Activated T-helper 1 cell treated with anti-CD3 and anti-CD28 coated beads, Interleukin-12 subunit alpha, Interleukin-12 subunit beta, Interleukin-2, Interleukin-4 antibody, amounts not matched to agents 30 ng/mL and 10 ng/mL and 1 ng/mL, durations not matched to agents 14 hours and 24 hours and 36 hours (primary cell): ENCODE measurements at regions of chr16 and their contacts with region 1.

Region 1: DNA sequence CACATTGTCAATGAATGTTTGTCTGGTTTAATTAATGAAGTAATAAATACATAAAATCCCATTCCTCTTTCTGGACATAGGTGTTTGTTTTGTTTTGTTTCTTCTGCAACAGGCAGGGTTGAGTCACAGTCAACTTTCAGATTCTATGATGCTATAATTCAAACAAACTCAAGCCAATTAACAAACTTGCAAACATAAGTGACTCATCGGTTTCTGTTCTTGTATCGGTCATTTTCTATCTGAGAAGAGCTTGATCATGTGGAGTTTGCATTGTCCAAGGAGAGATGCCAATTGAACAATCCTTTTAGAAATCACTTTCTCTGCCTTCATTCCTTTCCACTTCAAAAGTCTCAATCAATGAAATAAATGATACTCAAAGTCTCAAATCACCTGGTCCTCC is 294.2 kb upstream of the C16orf82 start:
- DNase-seq: no peak
- H3K4me3 Mint-ChIP-seq: no peak overlapping the region
- H3K27ac Mint-ChIP-seq: peak overlapping the region; percentile 50
- H3K4me1 Mint-ChIP-seq: peaks cover 28% of the 10 kb centered on the region
- H3K27me3 Mint-ChIP-seq: no peaks in the 10 kb centered on the region

Region 2: GRCh38 chr16:25966172-25967097 is 806.1 kb before region 1 on chr16:
- intact Hi-C with region 1: loop called (anchors 1 kb)
- DNase-seq: peak; percentile 26
- H3K4me3 Mint-ChIP-seq: peak overlapping the region; percentile 49
- H3K27ac Mint-ChIP-seq: peak overlapping the region; percentile 89
- H3K4me1 Mint-ChIP-seq: peaks cover 50% of the 10 kb centered on the region
- H3K27me3 Mint-ChIP-seq: peaks cover 6% of the 10 kb centered on the region

Region 3: DNA sequence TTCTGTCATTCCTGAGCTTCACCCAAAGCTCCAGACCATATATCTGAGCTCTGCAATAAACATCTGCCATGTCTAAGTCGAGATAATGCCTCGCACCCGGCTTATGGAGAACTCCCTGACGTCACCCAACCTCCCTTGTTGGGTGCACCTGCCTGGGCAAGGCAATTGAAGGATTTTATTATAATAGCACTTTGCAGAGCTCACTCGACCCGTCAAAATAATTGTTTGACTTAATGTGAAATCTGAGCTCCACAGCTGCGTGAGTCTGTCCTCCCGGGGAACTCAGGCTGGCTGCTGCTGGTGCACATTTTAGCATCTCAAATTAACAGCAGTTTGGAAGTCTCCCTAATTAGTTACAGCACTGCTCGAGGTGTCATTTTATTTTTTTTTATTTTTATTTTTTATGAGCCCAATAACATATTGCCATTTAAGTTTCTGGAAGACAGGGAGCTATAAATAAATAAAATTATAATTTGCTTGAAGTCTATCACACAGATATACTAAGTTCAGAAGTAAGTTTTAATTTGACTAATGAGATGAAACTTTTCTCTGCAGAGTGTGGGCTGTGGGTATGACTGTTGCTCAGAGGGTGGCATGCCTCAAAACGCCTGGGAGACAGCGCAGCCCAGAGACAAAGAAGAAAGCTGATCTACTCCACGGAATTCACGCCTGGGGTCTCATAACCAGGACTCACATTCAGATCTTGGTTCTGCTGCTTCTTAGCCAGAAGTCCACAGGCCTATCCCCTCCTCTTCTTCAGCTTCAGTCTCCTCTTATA is 107.2 kb before region 1 on chr16:
- intact Hi-C with region 1: loop called (anchors 2 kb)
- DNase-seq: no peak
- H3K4me3 Mint-ChIP-seq: no peak overlapping the region
- H3K27ac Mint-ChIP-seq: peak overlapping the region; percentile 51
- H3K4me1 Mint-ChIP-seq: peaks cover 30% of the 10 kb centered on the region
- H3K27me3 Mint-ChIP-seq: no peaks in the 10 kb centered on the region

Region 4: DNA sequence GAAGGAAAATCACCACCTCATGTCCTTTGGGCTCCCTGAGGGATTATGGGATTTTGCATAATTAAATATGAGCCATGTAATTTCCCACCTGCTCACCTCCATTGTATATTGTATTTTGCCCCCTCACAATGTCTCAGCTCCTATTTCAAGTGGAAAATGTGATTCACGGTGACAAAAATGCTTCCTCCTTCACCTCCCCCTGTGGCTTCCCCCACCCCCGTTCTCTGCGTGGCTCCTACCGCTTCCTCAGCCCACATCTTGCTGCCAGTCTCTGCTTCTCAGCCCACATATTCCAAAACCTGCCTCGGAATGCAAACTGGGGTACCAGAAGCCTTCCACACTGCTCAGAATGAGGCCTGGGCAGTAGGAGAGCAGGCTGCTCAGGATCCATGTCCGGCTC is 100.3 kb before region 1 on chr16:
- intact Hi-C with region 1: loop called (anchors 2 kb)
- DNase-seq: no peak
- H3K4me3 Mint-ChIP-seq: peak overlapping the region; percentile 34
- H3K27ac Mint-ChIP-seq: peak overlapping the region; percentile 83
- H3K4me1 Mint-ChIP-seq: peaks cover 43% of the 10 kb centered on the region
- H3K27me3 Mint-ChIP-seq: peaks cover 3% of the 10 kb centered on the region

Region 5: DNA sequence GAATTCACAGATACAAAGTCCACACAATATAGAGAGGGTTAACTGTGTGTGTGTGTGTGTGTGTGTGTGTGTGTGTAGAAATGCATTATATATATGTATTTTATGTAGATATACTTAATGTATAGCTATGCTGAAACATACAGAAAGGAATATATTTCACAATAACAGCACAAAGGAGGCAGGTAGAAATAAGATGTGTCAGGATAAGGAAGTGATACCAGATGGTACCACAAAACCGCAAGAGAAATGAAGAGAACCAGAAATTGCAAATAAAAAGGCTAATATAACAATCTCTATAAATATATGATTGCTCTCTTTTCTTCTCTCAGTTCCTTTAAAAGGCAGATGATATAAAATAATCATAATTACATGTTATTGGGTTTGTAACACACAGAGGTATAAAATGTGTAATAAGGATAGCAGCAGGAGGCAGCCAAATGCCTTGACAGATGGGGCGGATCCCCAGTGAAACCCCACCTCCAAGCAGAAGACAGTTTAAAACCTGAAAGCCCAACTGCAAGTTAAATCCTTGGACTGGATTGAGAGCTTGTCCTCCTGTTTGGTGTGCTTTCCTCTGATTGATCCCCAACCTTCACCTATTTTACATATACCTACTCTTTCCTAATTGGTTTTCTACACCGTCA is 71.1 kb before region 1 on chr16:
- intact Hi-C with region 1: no loop called
- DNase-seq: no peak
- H3K4me3 Mint-ChIP-seq: no peak overlapping the region
- H3K27ac Mint-ChIP-seq: no peak overlapping the region
- H3K4me1 Mint-ChIP-seq: no peaks in the 10 kb centered on the region
- H3K27me3 Mint-ChIP-seq: peaks cover 2% of the 10 kb centered on the region